Endothelial cell of umbilical vein (primary cell): ENCODE measurements at regions of chr4 and their contacts with region 1.

Region 1: GRCh38 chr4:182478475-182478874 is 235.3 kb downstream of the TENM3 start:
- DNase-seq: peak; percentile 55
- H3K4me3 ChIP-seq: no peak overlapping the region
- H3K27ac ChIP-seq: no peak overlapping the region
- H3K4me1 ChIP-seq: no peaks in the 10 kb centered on the region
- H3K27me3 ChIP-seq: no peaks in the 10 kb centered on the region
- CTCF ChIP-seq: peak; percentile 34 to 39
- POLR2A ChIP-seq: no peak

Region 2: GRCh38 chr4:181143250-181143854 is 1335.1 kb before region 1 on chr4:
- CTCF ChIA-PET with region 1: no interaction called
- POLR2A ChIA-PET with region 1: no interaction called
- dilution Hi-C with region 1: no loop called
- intact Hi-C with region 1: loop called (anchors 5 kb)
- DNase-seq: peak; percentile 60
- H3K4me3 ChIP-seq: no peak overlapping the region
- H3K27ac ChIP-seq: no peak overlapping the region
- H3K4me1 ChIP-seq: no peaks in the 10 kb centered on the region
- H3K27me3 ChIP-seq: no peaks in the 10 kb centered on the region
- CTCF ChIP-seq: peak; percentile 72 to 75
- POLR2A ChIP-seq: no peak

Region 3: DNA sequence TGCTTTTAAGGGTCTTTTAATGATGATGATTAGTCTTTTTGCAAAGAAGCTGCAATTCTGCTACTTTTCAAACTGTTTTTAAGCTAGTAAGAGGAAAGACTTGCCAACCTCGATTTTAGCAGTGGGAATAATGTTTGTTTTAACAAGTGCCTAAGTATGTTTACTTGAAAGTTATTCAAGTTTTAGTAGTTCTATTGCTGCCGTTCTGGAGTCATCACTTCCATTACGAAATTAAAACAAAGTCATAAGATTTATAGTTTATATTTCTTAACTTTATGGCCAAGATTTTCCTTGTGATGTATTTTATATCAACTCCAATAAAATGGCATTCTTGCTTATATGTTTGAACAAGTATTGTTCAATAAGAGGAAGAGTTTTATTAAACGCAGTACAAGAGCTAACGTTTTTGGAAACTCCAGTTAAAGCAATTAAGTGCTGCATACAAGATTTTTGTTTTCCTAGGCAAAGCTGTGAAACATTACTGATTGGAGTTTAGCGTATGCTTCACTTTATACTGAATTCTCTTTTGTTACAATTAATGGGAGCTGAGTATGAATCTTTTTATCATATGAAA is 23.9 kb before region 1 on chr4:
- CTCF ChIA-PET with region 1: no interaction called
- POLR2A ChIA-PET with region 1: no interaction called
- dilution Hi-C with region 1: no loop called
- intact Hi-C with region 1: no loop called
- DNase-seq: no peak
- H3K4me3 ChIP-seq: no peak overlapping the region
- H3K27ac ChIP-seq: no peak overlapping the region
- H3K4me1 ChIP-seq: peaks cover 4% of the 10 kb centered on the region
- H3K27me3 ChIP-seq: peaks cover 19 to 36% of the 10 kb centered on the region in 2 experiments
- CTCF ChIP-seq: no peak
- POLR2A ChIP-seq: no peak